Thyroid gland (tissue), 4 donors: ENCODE measurements at regions of chr2 and their contacts with region 1.

Region 1: DNA sequence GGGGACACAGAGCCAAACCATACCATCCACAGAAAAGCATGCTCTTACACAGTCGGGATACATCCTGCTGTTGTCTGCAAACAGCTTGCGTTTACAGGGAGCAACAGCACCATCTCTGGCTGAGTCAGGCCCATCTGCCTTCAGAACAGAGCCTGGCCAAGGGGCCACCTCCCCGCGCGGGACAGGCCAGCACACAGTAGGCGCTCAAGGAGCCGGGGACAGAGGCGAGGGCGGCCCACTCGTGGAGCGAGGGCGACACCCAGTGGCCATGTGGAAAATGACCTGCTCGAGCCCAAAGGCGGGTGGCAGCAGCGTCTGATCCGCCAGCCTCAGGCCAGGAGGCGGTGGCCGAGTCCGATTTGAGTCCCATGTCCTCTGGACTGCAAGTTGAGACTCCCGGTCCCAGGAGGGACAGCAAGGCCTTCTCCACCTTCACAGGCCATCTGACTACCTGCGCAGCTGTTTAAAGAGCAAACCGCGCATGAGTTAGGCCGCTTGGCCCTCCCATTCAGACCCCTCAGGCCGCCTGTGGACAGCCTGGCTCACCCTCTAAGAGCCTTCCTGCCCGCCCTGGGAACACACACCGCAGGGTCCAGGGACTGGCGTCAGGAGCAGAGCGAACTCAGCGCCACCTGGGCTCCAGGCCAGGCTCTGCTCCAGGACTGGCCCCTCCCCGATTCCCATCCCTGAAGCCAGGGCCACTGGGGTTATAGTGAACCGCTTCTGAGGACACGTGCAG is 38.3 kb downstream of the TTC32 start:
- DNase-seq: peak; percentile 65 to 69
- H3K4me3 ChIP-seq: no peak overlapping the region
- H3K27ac ChIP-seq: no peak overlapping the region
- H3K4me1 ChIP-seq: peaks cover 5 to 6% of the 10 kb centered on the region in 2 donors
- H3K27me3 ChIP-seq: no peaks in the 10 kb centered on the region
- CTCF ChIP-seq: peak; percentile 86 to 98 (median 92)
- POLR2A ChIP-seq: no peak

Region 2: GRCh38 chr2:18520451-18521425 is 1342.7 kb before region 1 on chr2:
- intact Hi-C with region 1: loop called (anchors 5 kb)
- DNase-seq: peak; percentile 79 to 82
- H3K4me3 ChIP-seq: no peak overlapping the region
- H3K27ac ChIP-seq: peak overlapping the region in 1 of 3 donors; percentile 36
- H3K4me1 ChIP-seq: peaks cover 0 to 7% of the 10 kb centered on the region in 2 donors
- H3K27me3 ChIP-seq: no peaks in the 10 kb centered on the region
- CTCF ChIP-seq: peak; percentile 55 to 91 (median 75)
- POLR2A ChIP-seq: no peak

Region 3: GRCh38 chr2:18749912-18750526 is 1113.5 kb before region 1 on chr2:
- intact Hi-C with region 1: loop called (anchors 10 kb)
- DNase-seq: peak; percentile 50 to 62
- H3K4me3 ChIP-seq: no peak overlapping the region
- H3K27ac ChIP-seq: no peak overlapping the region
- H3K4me1 ChIP-seq: peaks cover 0 to 6% of the 10 kb centered on the region in 2 donors
- H3K27me3 ChIP-seq: no peaks in the 10 kb centered on the region
- CTCF ChIP-seq: peak; percentile 41 to 88 (median 72)
- POLR2A ChIP-seq: no peak

Region 4: DNA sequence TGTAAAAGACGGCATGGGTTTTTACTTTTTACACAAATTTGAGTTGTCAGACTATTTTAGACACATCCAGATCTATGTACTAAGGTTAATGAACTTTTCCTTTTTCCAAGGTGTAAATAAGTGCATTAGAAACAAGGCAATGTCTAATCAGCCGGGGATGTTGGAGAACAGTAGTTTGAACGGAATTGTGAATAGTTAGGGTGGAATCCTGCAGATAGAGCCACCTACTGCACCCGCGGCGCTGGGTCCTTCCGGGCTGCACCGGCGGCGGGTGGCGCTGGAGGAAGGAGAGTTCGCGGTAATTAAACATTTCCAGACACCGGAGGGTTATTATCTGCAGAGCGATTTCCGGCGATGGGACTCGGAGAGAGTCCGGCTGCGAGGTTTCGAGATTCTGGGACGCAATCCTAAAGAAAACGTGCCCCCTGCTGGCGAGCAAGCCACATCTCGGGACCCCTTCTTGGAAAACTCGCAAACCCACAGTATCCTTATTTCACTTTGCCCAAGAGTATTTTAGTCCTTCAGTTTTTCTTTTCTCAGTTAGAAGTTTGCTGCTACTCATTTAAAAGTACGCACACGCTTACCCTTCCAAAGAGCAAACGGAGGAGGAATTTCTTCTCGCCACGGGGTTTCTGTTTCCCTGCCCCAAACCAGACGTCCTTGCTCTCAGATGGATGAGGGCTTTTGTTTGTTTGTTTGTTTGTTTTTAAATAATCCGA is 500.6 kb before region 1 on chr2:
- intact Hi-C with region 1: loop called (anchors 10 kb)
- DNase-seq: peak; percentile 74 to 81
- H3K4me3 ChIP-seq: peak overlapping the region in 2 of 3 donors; percentile 35 to 36
- H3K27ac ChIP-seq: peak overlapping the region in 1 of 3 donors; percentile 61
- H3K4me1 ChIP-seq: peaks cover 12 to 17% of the 10 kb centered on the region in 2 donors
- H3K27me3 ChIP-seq: peaks cover 14% of the 10 kb centered on the region
- CTCF ChIP-seq: peak; percentile 37 to 78 (median 68)
- POLR2A ChIP-seq: no peak